Activated CD8-positive, alpha-beta T cell treated with anti-CD3 and anti-CD28 coated beads for 36 hours (primary cell): ENCODE measurements at regions of chr19 and their contacts with region 1.

Region 1: DNA sequence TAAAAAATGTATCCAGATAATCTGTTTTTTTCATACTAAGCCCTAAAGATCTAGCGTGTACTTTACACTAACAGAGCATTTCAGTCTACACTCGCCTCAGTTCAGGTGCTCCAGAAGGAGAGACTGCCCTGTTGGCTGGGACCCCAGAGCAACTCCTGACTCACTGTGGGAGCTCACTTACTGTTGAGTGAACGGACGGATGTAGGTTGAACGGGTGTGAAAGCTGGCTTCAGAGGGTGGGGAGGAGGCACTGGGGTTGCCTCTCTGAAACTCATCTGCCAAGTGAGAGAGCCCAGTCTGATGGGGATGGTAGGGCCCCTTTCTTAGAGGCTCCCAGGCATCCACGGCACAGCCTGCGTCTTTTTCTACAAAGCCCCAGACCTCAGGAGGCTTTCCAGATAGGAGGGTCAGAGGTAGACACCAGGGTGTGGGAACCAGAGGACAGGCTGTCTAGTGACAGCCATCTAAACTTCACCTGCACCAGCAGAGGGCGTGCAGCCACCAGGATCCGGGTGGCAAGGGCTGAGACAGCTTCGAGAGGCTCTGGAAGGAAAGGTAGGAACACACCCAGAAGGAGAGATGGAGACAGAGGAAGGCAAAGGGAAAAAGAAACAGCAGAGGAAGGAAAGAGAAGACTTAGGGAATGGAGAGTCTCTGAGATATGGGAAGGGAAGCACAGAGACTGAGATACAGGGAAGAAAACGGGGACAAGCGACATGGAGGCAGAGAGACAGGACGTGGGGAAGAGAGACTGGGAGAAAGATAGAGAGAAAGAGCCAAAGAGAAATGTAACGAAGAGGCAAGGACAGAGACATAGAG is 3.7 kb downstream of the KASH5 start:
- DNase-seq: peak; percentile 82
- ATAC-seq: peak; percentile 86
- H3K4me3 Mint-ChIP-seq: no peak overlapping the region
- H3K27ac Mint-ChIP-seq: peak overlapping the region; percentile 23
- H3K4me1 Mint-ChIP-seq: peaks cover 10% of the 10 kb centered on the region
- H3K27me3 Mint-ChIP-seq: no peaks in the 10 kb centered on the region
- CTCF ChIP-seq: peak; percentile 93

Region 2: GRCh38 chr19:49255674-49256073 is 136.1 kb before region 1 on chr19:
- CTCF ChIA-PET with region 1: no interaction called
- POLR2A ChIA-PET with region 1: no interaction called
- intact Hi-C with region 1: no loop called
- DNase-seq: no peak
- ATAC-seq: no peak
- H3K4me3 Mint-ChIP-seq: no peak overlapping the region
- H3K27ac Mint-ChIP-seq: no peak overlapping the region
- H3K4me1 Mint-ChIP-seq: no peaks in the 10 kb centered on the region
- H3K27me3 Mint-ChIP-seq: peaks cover 21% of the 10 kb centered on the region
- CTCF ChIP-seq: no peak

Region 3: GRCh38 chr19:49294401-49294800 is 97.4 kb before region 1 on chr19:
- CTCF ChIA-PET with region 1: no interaction called
- POLR2A ChIA-PET with region 1: no interaction called
- intact Hi-C with region 1: no loop called
- DNase-seq: no peak
- ATAC-seq: no peak
- H3K4me3 Mint-ChIP-seq: no peak overlapping the region
- H3K27ac Mint-ChIP-seq: no peak overlapping the region
- H3K4me1 Mint-ChIP-seq: no peaks in the 10 kb centered on the region
- H3K27me3 Mint-ChIP-seq: no peaks in the 10 kb centered on the region
- CTCF ChIP-seq: no peak

Region 4: GRCh38 chr19:49421039-49421877 is 29.5 kb after region 1 on chr19:
- CTCF ChIA-PET with region 1: interaction called, 13 read pairs
- POLR2A ChIA-PET with region 1: no interaction called
- intact Hi-C with region 1: loop called (anchors 5 kb)
- DNase-seq: peak; percentile 59
- ATAC-seq: peak; percentile 22
- H3K4me3 Mint-ChIP-seq: peak overlapping the region; percentile 12
- H3K27ac Mint-ChIP-seq: no peak overlapping the region
- H3K4me1 Mint-ChIP-seq: peaks cover 30% of the 10 kb centered on the region
- H3K27me3 Mint-ChIP-seq: peaks cover 70% of the 10 kb centered on the region
- CTCF ChIP-seq: no peak

Region 5: GRCh38 chr19:49436369-49437017 is 44.7 kb after region 1 on chr19:
- CTCF ChIA-PET with region 1: interaction called, 13 read pairs
- POLR2A ChIA-PET with region 1: interaction called, 3 read pairs
- intact Hi-C with region 1: loop called (anchors 5 kb)
- DNase-seq: peak; percentile 91
- ATAC-seq: peak; percentile 53
- H3K4me3 Mint-ChIP-seq: no peak overlapping the region
- H3K27ac Mint-ChIP-seq: no peak overlapping the region
- H3K4me1 Mint-ChIP-seq: peaks cover 23% of the 10 kb centered on the region
- H3K27me3 Mint-ChIP-seq: peaks cover 87% of the 10 kb centered on the region
- CTCF ChIP-seq: no peak

Region 6: GRCh38 chr19:49468746-49469447 is 77.1 kb after region 1 on chr19:
- CTCF ChIA-PET with region 1: interaction called, 16 read pairs
- POLR2A ChIA-PET with region 1: interaction called, 3 read pairs
- intact Hi-C with region 1: no loop called
- DNase-seq: peak; percentile 89
- ATAC-seq: peak; percentile 60
- H3K4me3 Mint-ChIP-seq: peak overlapping the region; percentile 24
- H3K27ac Mint-ChIP-seq: peak overlapping the region; percentile 95
- H3K4me1 Mint-ChIP-seq: peaks cover 41% of the 10 kb centered on the region
- H3K27me3 Mint-ChIP-seq: no peaks in the 10 kb centered on the region
- CTCF ChIP-seq: no peak